Caco-2 (cell line): ENCODE measurements at regions of chr2 and their contacts with region 1.

Region 1: DNA sequence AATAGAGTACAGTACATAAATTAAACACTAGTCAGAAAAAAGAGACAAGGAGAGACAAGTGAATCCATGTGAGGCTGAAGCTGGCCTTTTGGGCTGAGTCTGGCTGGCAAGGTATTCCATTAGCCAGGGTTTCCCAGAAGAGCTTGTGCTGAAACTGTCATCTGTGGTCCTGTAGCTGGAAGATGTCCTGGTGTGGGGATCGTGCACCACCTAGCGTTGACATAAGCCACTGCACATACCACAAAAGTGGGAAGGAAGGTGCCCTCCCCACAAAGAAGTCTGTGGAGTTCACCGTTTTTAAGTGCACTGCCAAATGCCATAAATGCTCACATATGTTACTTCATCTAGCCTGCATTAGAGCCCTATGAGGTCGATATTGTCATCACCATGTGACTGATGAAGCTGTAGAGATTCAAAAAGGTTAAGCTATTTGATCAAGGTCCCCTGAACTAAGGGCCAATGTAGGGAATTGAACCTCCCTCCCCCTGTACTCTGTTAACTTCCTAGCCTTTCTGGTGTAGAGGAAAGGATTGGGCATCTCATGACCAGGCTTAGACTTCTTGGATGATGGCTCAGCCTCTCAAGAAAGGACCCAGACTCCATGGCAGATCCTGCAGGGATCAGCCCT is 31.9 kb upstream of the GALNT14 start:
- DNase-seq: peak; percentile 66 to 74
- H3K4me3 ChIP-seq: no peak overlapping the region
- H3K4me3 Mint-ChIP-seq: no peak overlapping the region
- H3K27ac Mint-ChIP-seq: no peak overlapping the region
- H3K4me1 ChIP-seq: no peaks in the 10 kb centered on the region
- H3K4me1 Mint-ChIP-seq: no peaks in the 10 kb centered on the region
- H3K27me3 ChIP-seq: no peaks in the 10 kb centered on the region
- H3K27me3 Mint-ChIP-seq: peaks cover 18% of the 10 kb centered on the region
- CTCF ChIP-seq: peak; percentile 92 to 93

Region 2: GRCh38 chr2:30862054-30862651 is 308.0 kb before region 1 on chr2:
- CTCF ChIA-PET with region 1: interaction called, 4 read pairs
- POLR2A ChIA-PET with region 1: no interaction called
- intact Hi-C with region 1: loop called (anchors 1 kb)
- DNase-seq: peak; percentile 71 to 76
- H3K4me3 ChIP-seq: no peak overlapping the region
- H3K4me3 Mint-ChIP-seq: no peak overlapping the region
- H3K27ac Mint-ChIP-seq: no peak overlapping the region
- H3K4me1 ChIP-seq: no peaks in the 10 kb centered on the region
- H3K4me1 Mint-ChIP-seq: no peaks in the 10 kb centered on the region
- H3K27me3 ChIP-seq: no peaks in the 10 kb centered on the region
- H3K27me3 Mint-ChIP-seq: peaks cover 9% of the 10 kb centered on the region
- CTCF ChIP-seq: peak; percentile 98 to 99

Region 3: DNA sequence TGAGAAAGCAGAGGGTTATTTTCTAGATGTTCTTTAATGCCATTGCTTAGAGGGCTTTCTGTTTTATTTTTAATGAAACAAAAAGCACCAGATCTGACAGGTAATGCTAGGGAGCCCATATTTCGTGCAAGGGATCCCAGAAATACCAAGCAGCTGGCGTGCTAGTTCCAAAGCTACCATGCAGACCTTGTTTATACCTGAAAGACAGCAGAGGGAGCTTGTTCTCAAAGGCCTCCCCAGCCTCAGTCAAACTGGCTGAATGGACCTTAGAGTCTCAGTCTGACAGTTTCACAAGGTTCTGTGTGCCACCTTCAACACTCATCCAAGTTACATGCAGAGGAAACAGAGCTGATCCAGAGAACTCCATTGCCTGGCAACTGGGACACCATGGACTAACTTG is 80.5 kb before region 1 on chr2:
- CTCF ChIA-PET with region 1: interaction called, 13 read pairs
- POLR2A ChIA-PET with region 1: no interaction called
- intact Hi-C with region 1: loop called (anchors 1 kb)
- DNase-seq: no peak
- H3K4me3 ChIP-seq: no peak overlapping the region
- H3K4me3 Mint-ChIP-seq: no peak overlapping the region
- H3K27ac Mint-ChIP-seq: no peak overlapping the region
- H3K4me1 ChIP-seq: no peaks in the 10 kb centered on the region
- H3K4me1 Mint-ChIP-seq: no peaks in the 10 kb centered on the region
- H3K27me3 ChIP-seq: no peaks in the 10 kb centered on the region
- H3K27me3 Mint-ChIP-seq: peaks cover 15% of the 10 kb centered on the region
- CTCF ChIP-seq: no peak

Region 4: DNA sequence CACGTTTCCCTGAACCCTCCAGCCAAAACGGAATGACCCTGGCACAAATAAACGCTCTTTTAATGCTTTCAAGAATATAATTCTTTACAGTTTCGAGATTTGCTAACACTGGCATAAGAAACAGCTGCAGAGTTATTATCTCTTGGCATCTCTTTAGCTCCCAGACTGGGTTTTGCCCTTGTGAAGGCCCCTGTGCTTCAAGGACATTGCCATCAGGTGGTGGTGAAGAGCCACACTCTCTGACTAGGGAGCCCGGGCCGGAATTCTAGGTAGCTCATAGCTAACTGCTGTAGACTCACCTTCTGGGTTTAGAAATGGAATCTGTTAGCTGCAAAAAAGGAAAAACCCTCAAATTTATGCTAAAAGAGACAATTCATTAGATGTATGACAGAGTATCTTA is 18.7 kb before region 1 on chr2:
- CTCF ChIA-PET with region 1: interaction called, 14 read pairs
- POLR2A ChIA-PET with region 1: no interaction called
- intact Hi-C with region 1: loop called (anchors 1 kb)
- DNase-seq: peak in 1 of 2 experiments; percentile 21
- H3K4me3 ChIP-seq: no peak overlapping the region
- H3K4me3 Mint-ChIP-seq: no peak overlapping the region
- H3K27ac Mint-ChIP-seq: no peak overlapping the region
- H3K4me1 ChIP-seq: no peaks in the 10 kb centered on the region
- H3K4me1 Mint-ChIP-seq: no peaks in the 10 kb centered on the region
- H3K27me3 ChIP-seq: 0 out of 2 replicates have a peak, but pooled peaks cover 1% of the 10 kb centered on the region
- H3K27me3 Mint-ChIP-seq: peaks cover 25% of the 10 kb centered on the region
- CTCF ChIP-seq: peak in 1 of 2 experiments; percentile 41

Region 5: GRCh38 chr2:31333527-31334183 is 163.5 kb after region 1 on chr2:
- CTCF ChIA-PET with region 1: interaction called, 11 read pairs
- POLR2A ChIA-PET with region 1: no interaction called
- intact Hi-C with region 1: loop called (anchors 1 kb)
- DNase-seq: peak; percentile 82 to 86
- H3K4me3 ChIP-seq: no peak overlapping the region
- H3K4me3 Mint-ChIP-seq: no peak overlapping the region
- H3K27ac Mint-ChIP-seq: no peak overlapping the region
- H3K4me1 ChIP-seq: no peaks in the 10 kb centered on the region
- H3K4me1 Mint-ChIP-seq: no peaks in the 10 kb centered on the region
- H3K27me3 ChIP-seq: no peaks in the 10 kb centered on the region; the same call in 1 of the 2 replicates
- H3K27me3 Mint-ChIP-seq: no peaks in the 10 kb centered on the region
- CTCF ChIP-seq: peak; percentile 91 to 98